Activated CD8-positive, alpha-beta T cell treated with anti-CD3 and anti-CD28 coated beads for 36 hours (primary cell): ENCODE measurements at regions of chr5 and their contacts with region 1.

Region 1: GRCh38 chr5:36079200-36079761 is 12.6 kb upstream of the UGT3A2 start:
- DNase-seq: peak; percentile 44
- ATAC-seq: peak; percentile 97
- H3K4me3 Mint-ChIP-seq: no peak overlapping the region
- H3K27ac Mint-ChIP-seq: no peak overlapping the region
- H3K4me1 Mint-ChIP-seq: no peaks in the 10 kb centered on the region
- H3K27me3 Mint-ChIP-seq: peaks cover 7% of the 10 kb centered on the region
- CTCF ChIP-seq: peak; percentile 78

Region 2: GRCh38 chr5:36089989-36090564 is 10.8 kb after region 1 on chr5:
- CTCF ChIA-PET with region 1: interaction called, 25 read pairs
- POLR2A ChIA-PET with region 1: no interaction called
- intact Hi-C with region 1: no loop called
- DNase-seq: peak; percentile 43
- ATAC-seq: peak; percentile 71
- H3K4me3 Mint-ChIP-seq: no peak overlapping the region
- H3K27ac Mint-ChIP-seq: no peak overlapping the region
- H3K4me1 Mint-ChIP-seq: no peaks in the 10 kb centered on the region
- H3K27me3 Mint-ChIP-seq: peaks cover 4% of the 10 kb centered on the region
- CTCF ChIP-seq: peak; percentile 14

Region 3: GRCh38 chr5:36151434-36152323 is 72.4 kb after region 1 on chr5 and contains the starts of genes LMBRD2 and SKP2:
- CTCF ChIA-PET with region 1: interaction called, 11 read pairs
- POLR2A ChIA-PET with region 1: no interaction called
- intact Hi-C with region 1: no loop called
- DNase-seq: peak; percentile 99
- ATAC-seq: peak; percentile 98
- H3K4me3 Mint-ChIP-seq: peak within 1 kb of the TSS; percentile 99
- H3K27ac Mint-ChIP-seq: peak within 1 kb of the TSS; percentile 89
- H3K4me1 Mint-ChIP-seq: peaks cover 58% of the 10 kb centered on the region
- H3K27me3 Mint-ChIP-seq: no peaks in the 10 kb centered on the region
- CTCF ChIP-seq: no peak
- total RNA-seq, gene LMBRD2: 9.9 to 10.8 TPM
- total RNA-seq, gene SKP2: 55.8 to 60.2 TPM

Region 4: DNA sequence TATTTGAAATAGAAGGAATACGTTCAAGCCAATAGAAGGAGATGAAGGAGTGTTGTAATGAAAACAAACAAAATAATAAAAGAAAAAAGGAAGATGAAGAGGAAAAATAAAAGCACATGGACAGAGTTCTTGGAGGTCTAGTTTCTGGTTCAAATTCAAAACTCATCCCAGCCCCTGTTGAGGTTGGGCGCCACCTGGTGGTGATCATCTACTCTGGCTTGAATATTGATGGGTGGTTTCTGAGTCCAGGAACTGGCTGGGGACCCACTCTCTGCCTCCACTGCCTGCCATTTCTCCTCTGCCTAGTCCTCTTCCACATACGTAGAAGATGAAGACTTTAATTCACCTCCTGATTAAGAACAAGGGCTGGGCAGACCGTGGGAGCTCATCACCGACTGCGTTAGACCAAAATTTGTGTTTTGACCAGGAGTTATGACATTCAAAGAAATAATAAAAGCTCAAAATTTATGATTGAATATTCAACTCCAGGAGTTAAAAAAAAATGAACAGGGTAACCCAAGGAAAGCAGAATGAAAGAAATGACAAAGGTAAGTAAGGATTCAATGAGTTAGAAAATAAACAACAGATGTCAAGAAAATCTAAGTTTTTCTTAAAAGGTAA is 428.2 kb after region 1 on chr5:
- CTCF ChIA-PET with region 1: interaction called, 31 read pairs
- POLR2A ChIA-PET with region 1: no interaction called
- intact Hi-C with region 1: no loop called
- DNase-seq: peak; percentile 86
- ATAC-seq: no peak
- H3K4me3 Mint-ChIP-seq: no peak overlapping the region
- H3K27ac Mint-ChIP-seq: no peak overlapping the region
- H3K4me1 Mint-ChIP-seq: no peaks in the 10 kb centered on the region
- H3K27me3 Mint-ChIP-seq: peaks cover 7% of the 10 kb centered on the region
- CTCF ChIP-seq: peak; percentile 85